Heart left ventricle (tissue), 16 donors: ENCODE measurements at regions of chr11 and their contacts with region 1.

Region 1: DNA sequence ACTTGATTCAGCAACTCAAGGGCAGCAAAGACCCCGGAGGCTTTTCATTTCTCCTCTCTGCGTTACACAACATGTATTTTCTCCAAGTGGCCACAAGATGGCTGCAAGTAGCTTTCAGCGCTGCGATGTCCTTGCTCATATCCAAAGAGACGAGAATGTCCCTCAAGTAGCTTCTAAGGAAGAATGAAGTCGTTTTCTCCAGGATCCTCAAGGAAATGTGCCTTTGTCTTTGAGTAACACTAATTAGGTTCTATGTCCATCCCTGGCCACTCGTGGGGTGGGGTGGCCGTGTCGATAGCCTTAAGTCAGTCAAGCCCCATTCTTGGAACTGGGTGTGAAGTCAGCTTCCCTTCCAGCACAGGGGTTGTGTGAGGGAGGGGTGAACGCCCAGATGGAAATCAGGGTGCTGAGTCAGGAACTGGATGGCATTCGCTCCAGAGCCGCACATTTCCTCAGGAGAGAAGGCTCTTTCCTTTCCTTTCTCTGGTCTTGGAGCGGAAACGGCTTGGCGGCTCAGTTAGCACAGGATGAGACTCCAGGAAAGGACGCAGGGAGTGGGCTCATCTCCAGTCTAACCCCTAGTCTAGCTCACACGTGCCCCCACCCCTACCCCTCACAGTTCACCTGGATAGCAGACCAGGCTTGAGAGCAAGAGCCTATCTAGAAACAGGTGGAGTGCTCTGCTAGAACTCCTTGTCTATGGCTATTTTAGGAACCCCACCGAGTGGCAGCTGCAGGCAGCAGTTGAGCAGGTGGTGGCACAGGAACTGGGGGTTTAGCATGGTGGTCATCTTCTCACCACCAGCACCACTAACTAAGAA is 44.3 kb downstream of the NNMT start:
- DNase-seq: peak; percentile 36 to 68 (median 37)
- ATAC-seq: peak; percentile 61 to 90 (median 84)
- H3K4me3 ChIP-seq: peak overlapping the region in 9 of 12 donors; percentile 19 to 43 (median 36)
- H3K27ac ChIP-seq: peak overlapping the region in 11 of 12 donors; percentile 30 to 67 (median 53)
- H3K4me1 ChIP-seq: peaks cover 0 to 16% (median 7%) of the 10 kb centered on the region in 12 donors
- H3K27me3 ChIP-seq: no peaks in the 10 kb centered on the region
- CTCF ChIP-seq: peak; percentile 72 to 90 (median 76)
- POLR2A ChIP-seq: no peak

Region 2: GRCh38 chr11:114243461-114244372 is 96.8 kb before region 1 on chr11:
- intact Hi-C with region 1: no loop called
- DNase-seq: peak in 4 of 5 donors; percentile 66 to 79 (median 73)
- ATAC-seq: peak; percentile 61 to 91 (median 72)
- H3K4me3 ChIP-seq: no peak overlapping the region
- H3K27ac ChIP-seq: peak overlapping the region in 10 of 12 donors; percentile 44 to 87 (median 64)
- H3K4me1 ChIP-seq: peaks cover 0 to 58% (median 30%) of the 10 kb centered on the region in 12 donors
- H3K27me3 ChIP-seq: no peaks in the 10 kb centered on the region
- CTCF ChIP-seq: no peak
- POLR2A ChIP-seq: no peak

Region 3: DNA sequence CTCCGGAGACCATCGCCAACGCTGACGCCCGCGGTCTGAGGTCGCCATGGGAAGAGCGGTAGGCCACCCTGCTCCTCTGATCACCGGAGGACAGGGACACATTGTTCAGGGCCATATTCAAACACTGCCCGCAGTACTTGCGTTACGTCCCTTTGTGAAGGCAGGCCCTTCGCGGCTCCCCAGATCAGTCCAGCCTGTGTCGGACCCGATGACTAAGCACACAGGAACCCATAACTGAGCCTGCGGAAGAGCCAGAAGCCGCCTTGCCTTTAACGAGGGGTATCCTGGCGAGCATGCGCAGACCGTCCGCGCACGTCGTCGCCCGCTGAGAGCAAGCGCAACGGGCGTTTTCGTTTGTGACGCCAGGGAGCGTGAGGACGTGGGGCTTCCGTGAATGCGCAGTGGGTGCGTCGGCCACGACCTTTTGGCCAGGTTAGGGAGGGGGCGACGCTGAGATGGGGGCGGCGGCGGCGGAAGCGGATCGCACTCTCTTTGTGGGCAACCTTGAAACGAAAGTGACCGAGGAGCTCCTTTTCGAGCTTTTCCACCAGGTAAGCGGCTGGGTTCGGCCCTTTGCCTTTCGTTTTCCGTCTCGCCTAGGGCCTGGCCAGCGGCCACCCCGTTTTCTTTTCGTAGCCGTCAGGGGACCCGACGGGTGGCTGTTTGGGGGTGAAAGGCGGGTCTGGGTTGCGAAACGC is 59.8 kb after region 1 on chr11 and contains the starts of genes C11orf71 and RBM7:
- intact Hi-C with region 1: loop called in 4 of 10 experiments (anchors 5 to 10 kb)
- DNase-seq: peak; percentile 98 to 100 (median 99)
- ATAC-seq: peak; percentile 97 to 99 (median 98)
- H3K4me3 ChIP-seq: peak within 1 kb of the TSS; percentile 63 to 94 (median 76)
- H3K27ac ChIP-seq: peak within 1 kb of the TSS; percentile 89 to 100 (median 98)
- H3K4me1 ChIP-seq: peaks cover 0 to 69% (median 53%) of the 10 kb centered on the region in 12 donors
- H3K27me3 ChIP-seq: no peaks in the 10 kb centered on the region
- CTCF ChIP-seq: peak in 2 of 12 donors; percentile 12 to 13
- POLR2A ChIP-seq: peak in 1 of 2 donors; percentile 92
- total RNA-seq, gene C11orf71: 5.1 to 13.4 (median 8.6) TPM
- total RNA-seq, gene RBM7: 8.8 to 28.7 (median 20.8) TPM

Region 4: DNA sequence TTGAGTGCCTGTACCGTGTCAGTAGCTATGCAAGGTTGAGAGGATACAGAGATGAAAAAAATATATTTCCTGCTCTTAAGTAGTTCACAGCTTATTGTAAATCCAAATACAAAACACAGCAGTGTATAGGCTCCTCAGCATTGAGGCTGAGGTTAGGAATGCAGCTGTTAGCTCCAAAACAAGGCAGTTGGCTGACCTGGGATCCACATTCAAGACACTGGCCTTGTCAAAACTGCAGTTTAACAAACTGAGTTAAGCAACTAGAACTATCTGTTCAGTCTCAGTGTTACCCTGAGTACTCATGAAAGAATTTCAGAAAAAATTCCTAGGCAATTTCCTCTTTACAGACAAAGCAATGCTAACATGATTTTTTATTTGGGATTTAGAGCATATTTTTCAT is 141.6 kb after region 1 on chr11:
- intact Hi-C with region 1: loop called in 1 of 10 experiments (anchors 10 kb)
- DNase-seq: no peak
- ATAC-seq: no peak
- H3K4me3 ChIP-seq: no peak overlapping the region
- H3K27ac ChIP-seq: no peak overlapping the region
- H3K4me1 ChIP-seq: peaks cover 0 to 5% (median 0%) of the 10 kb centered on the region in 12 donors
- H3K27me3 ChIP-seq: no peaks in the 10 kb centered on the region
- CTCF ChIP-seq: no peak
- POLR2A ChIP-seq: no peak

Region 5: GRCh38 chr11:114610984-114611944 is 270.7 kb after region 1 on chr11:
- intact Hi-C with region 1: loop called in 4 of 10 experiments (anchors 10 kb)
- DNase-seq: no peak
- ATAC-seq: no peak
- H3K4me3 ChIP-seq: no peak overlapping the region
- H3K27ac ChIP-seq: no peak overlapping the region
- H3K4me1 ChIP-seq: no peaks in the 10 kb centered on the region
- H3K27me3 ChIP-seq: no peaks in the 10 kb centered on the region
- CTCF ChIP-seq: peak in 7 of 12 donors; percentile 16 to 21 (median 19)
- POLR2A ChIP-seq: no peak

Region 6: GRCh38 chr11:114876234-114876633 is 535.7 kb after region 1 on chr11:
- intact Hi-C with region 1: no loop called
- DNase-seq: no peak
- ATAC-seq: no peak
- H3K4me3 ChIP-seq: no peak overlapping the region
- H3K27ac ChIP-seq: no peak overlapping the region
- H3K4me1 ChIP-seq: no peaks in the 10 kb centered on the region
- H3K27me3 ChIP-seq: no peaks in the 10 kb centered on the region
- CTCF ChIP-seq: no peak
- POLR2A ChIP-seq: no peak

Region 7: DNA sequence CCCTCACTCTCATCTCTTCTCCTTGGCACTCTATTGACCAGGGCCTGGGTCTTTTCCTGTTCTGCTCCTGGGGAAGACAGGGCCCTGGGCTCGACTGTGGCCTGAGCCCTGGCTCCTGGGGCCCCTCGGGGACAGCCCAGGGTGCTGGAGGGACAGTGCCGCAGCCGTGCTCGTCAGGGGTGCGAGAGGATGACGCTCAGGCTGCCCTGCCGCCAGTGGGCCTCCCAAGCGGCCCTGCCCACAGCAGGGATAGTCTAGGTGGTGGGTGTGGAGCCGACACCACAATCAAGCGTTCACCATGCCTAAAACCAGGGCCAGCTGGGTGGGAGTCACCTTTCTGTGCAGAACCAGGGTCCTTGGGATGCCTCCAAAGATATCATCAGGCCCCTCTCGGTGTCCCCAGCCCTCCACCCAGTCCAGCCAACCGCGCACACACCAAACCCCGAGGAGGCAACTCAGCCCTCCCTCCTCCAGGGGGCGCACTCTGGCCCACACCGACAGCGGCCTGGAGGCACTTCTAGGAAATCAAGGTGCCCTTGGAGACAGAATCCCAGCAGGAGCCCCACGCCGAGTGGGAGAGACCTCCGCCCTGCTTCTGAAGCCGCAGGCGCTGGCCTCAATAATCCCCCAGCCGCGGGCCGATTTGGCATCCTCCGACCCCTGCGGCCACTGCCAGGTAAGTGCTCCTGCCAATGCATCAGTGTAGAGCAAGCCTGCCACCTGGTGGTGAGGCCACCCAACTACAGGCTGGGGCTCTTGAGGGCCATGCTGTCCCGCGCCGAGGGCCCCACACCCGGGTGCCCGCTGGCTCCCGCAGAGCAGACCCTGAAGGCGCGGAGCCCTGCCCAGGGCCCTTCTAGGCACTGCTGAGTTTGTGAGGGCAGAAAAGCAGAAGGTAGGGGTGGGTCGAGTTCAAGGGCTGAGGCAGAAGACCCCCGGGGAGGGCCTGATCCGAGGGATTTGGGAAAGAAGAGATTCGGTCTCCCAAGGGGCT is 1935.8 kb after region 1 on chr11:
- intact Hi-C with region 1: loop called in 1 of 10 experiments (anchors 5 kb)
- DNase-seq: peak; percentile 66 to 88 (median 72)
- ATAC-seq: peak; percentile 61 to 91 (median 81)
- H3K4me3 ChIP-seq: peak overlapping the region in 8 of 12 donors; percentile 28 to 47 (median 38)
- H3K27ac ChIP-seq: no peak overlapping the region
- H3K4me1 ChIP-seq: peaks cover 0 to 8% (median 2%) of the 10 kb centered on the region in 12 donors
- H3K27me3 ChIP-seq: peaks cover 0 to 13% (median 0%) of the 10 kb centered on the region in 9 donors
- CTCF ChIP-seq: peak; percentile 86 to 98 (median 96)
- POLR2A ChIP-seq: no peak